Esophagus squamous epithelium (tissue), 5 donors: ENCODE measurements at regions of chr16 and their contacts with region 1.

Region 1: GRCh38 chr16:69123910-69124309 is 8.5 kb downstream of the CHTF8 start:
- DNase-seq: no peak
- H3K4me3 ChIP-seq: no peak overlapping the region
- H3K27ac ChIP-seq: no peak overlapping the region
- H3K4me1 ChIP-seq: peaks cover 0 to 25% (median 4%) of the 10 kb centered on the region in 3 donors
- H3K27me3 ChIP-seq: no peaks in the 10 kb centered on the region
- CTCF ChIP-seq: peak; percentile 45 to 80 (median 68)
- POLR2A ChIP-seq: no peak

Region 2: GRCh38 chr16:68834550-68834949 is 289.4 kb before region 1 on chr16:
- intact Hi-C with region 1: no loop called
- DNase-seq: no peak
- H3K4me3 ChIP-seq: no peak overlapping the region
- H3K27ac ChIP-seq: no peak overlapping the region
- H3K4me1 ChIP-seq: no peaks in the 10 kb centered on the region
- H3K27me3 ChIP-seq: no peaks in the 10 kb centered on the region
- CTCF ChIP-seq: no peak
- POLR2A ChIP-seq: no peak

Region 3: DNA sequence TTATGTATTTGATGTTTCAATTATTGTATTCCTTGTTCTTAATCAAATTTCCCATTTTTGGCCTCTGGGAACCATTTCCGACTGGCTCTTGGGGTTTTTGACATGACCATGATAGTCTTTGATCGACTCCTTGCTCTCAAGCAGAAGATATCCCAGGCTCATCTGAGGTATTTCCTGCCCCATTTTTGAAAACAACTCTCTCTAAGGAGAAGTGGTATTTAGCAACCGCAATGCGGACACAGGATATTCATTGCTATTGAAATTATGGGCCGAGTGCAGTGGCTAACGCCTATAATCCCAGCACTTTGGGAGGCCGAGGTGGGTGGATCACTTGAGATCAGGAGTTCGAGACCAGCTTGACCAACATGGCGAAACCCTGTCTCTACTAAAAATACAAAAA is 275.1 kb before region 1 on chr16:
- intact Hi-C with region 1: loop called (anchors 5 kb)
- DNase-seq: no peak
- H3K4me3 ChIP-seq: no peak overlapping the region
- H3K27ac ChIP-seq: no peak overlapping the region
- H3K4me1 ChIP-seq: peaks cover 0 to 19% (median 7%) of the 10 kb centered on the region in 3 donors
- H3K27me3 ChIP-seq: no peaks in the 10 kb centered on the region
- CTCF ChIP-seq: no peak
- POLR2A ChIP-seq: no peak

Region 4: DNA sequence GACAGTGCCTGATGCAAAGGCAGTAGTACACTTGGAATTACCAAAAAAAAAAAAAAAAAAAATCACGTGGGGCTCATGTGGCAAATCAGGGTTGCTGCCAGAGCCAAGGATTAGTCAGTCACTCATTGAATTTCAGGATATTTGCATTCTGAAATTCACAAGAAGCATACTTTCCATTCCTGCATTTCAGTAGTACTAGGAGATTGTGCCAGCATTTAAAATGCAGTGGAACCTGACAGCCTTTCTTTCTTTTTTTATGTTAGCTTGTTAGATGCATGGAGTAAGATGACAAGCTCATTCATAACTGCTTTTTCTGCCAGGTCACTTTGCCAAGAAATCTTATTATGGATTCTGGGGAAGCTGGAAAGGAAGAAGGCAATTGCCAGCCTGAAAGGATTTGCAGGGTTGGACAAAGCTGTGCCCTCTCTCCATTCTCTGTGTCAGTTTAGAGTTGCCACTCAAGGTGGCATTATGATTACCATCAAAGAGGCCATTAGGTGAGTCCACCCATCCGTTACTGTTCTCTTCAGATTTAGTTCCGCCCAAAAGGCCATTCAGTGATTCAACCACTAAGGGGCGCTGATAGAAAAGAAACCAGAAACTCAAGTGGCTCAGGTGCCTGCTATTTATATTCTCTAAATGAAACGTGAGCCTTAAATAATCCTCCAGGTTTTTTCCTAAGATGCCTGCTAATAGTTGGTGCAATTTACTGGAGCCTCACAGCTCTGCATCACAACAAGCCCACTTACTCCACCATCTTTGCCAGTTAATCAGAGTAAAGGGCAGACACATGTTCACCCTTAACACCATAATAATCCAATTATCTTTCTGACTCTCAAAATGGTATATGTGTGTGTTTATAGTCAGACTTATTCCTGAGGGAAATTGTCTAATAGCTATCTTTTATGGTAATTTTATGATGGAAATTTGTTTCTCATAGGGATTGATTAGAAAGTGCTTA is 221.6 kb before region 1 on chr16:
- intact Hi-C with region 1: loop called (anchors 5 kb)
- DNase-seq: no peak
- H3K4me3 ChIP-seq: no peak overlapping the region
- H3K27ac ChIP-seq: peak overlapping the region in 2 of 4 donors; percentile 31 to 32
- H3K4me1 ChIP-seq: peaks cover under 1 to 21% (median 4%) of the 10 kb centered on the region in 3 donors
- H3K27me3 ChIP-seq: no peaks in the 10 kb centered on the region
- CTCF ChIP-seq: peak; percentile 27 to 87 (median 72)
- POLR2A ChIP-seq: no peak

Region 5: DNA sequence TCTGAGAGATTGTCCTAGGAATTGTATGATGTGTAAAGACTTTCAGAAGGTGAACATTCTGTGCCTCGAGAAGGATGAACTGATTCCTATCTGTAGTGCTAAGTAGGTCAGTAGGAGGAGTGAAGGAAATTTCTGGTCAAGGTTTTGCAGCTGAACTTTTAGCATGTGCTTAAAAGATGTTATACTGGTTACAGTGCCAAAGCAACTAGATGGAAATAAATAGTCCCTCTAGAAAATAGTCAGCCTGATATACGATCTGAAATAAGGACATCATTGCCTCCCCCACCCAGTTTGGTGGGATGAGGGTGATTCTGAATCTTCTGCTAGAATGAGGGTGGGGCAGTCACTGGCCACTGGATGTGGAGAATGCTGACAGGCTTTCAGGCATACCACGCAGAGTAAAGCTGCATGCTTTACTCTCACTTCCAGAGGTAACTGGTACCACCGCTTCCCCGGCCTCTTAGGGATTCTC is 130.0 kb after region 1 on chr16:
- intact Hi-C with region 1: no loop called
- DNase-seq: no peak
- H3K4me3 ChIP-seq: no peak overlapping the region
- H3K27ac ChIP-seq: peak overlapping the region; percentile 19 to 83 (median 76)
- H3K4me1 ChIP-seq: peaks cover 0 to 45% (median 13%) of the 10 kb centered on the region in 3 donors
- H3K27me3 ChIP-seq: no peaks in the 10 kb centered on the region
- CTCF ChIP-seq: no peak
- POLR2A ChIP-seq: no peak